AG04450 (cell line): ENCODE measurements at regions of chr14 and their contacts with region 1.

Region 1: DNA sequence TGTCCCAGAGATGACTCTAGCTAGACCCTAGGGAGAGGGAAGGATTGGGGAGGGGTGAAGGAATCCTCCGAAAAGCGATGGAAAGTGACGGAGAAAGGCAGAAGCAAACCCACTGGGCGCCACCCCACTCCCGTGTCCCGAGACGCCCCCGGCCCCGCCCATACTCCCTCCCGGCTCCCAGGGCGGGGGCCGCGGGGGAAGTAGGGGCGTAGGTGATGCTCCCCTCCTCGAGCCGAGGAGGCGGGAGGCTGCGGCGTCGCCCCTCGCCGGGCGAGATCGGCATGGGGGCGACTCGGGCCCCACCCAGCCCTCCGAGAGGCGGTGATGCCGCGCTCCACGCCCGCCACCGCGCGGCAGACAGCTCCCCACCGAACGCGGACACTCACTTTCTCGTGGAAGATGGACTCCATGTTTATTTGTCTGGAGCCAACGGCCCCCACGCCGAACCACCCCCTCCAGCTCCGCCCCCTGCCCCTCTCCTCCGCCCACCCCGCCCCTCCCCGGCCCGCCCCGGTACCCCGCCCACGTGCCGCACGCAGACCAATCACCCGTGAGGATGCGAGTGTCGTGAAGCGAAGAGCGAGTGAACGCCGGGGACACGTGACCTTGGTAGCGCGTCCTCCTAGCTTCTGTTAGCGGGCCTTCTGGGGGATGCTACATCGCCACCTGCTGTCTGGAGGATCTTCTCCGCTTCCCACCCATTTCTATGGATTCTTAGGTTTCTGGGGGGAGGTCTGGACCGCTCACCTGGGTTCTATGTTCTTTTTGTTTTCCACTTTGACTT is at the start of gene ATXN3:
- DNase-seq: peak; percentile 96
- H3K4me3 ChIP-seq: peak within 1 kb of the TSS; percentile 90
- H3K27ac ChIP-seq: peak within 1 kb of the TSS; percentile 96
- H3K27me3 ChIP-seq: no peaks in the 10 kb centered on the region
- CTCF ChIP-seq: peak; percentile 81
- polyA plus RNA-seq, gene ATXN3: 28.9 and 38.2 TPM in 2 replicates

Region 2: GRCh38 chr14:92039719-92040430 is 66.5 kb before region 1 on chr14 and contains the start of gene TRIP11:
- CTCF ChIA-PET with region 1: interaction called, 7 read pairs
- POLR2A ChIA-PET with region 1: interaction called, 15 read pairs
- DNase-seq: peak; percentile 88
- H3K4me3 ChIP-seq: peak within 1 kb of the TSS; percentile 86
- H3K27ac ChIP-seq: peak within 1 kb of the TSS; percentile 100
- H3K27me3 ChIP-seq: no peaks in the 10 kb centered on the region
- CTCF ChIP-seq: no peak
- polyA plus RNA-seq, gene TRIP11: 22.8 and 35.5 TPM in 2 replicates

Region 3: GRCh38 chr14:92093320-92093719 is 13.0 kb before region 1 on chr14:
- CTCF ChIA-PET with region 1: interaction called, 14 read pairs
- POLR2A ChIA-PET with region 1: no interaction called
- DNase-seq: no peak
- H3K4me3 ChIP-seq: no peak overlapping the region
- H3K27ac ChIP-seq: no peak overlapping the region
- H3K27me3 ChIP-seq: no peaks in the 10 kb centered on the region
- CTCF ChIP-seq: no peak

Region 4: DNA sequence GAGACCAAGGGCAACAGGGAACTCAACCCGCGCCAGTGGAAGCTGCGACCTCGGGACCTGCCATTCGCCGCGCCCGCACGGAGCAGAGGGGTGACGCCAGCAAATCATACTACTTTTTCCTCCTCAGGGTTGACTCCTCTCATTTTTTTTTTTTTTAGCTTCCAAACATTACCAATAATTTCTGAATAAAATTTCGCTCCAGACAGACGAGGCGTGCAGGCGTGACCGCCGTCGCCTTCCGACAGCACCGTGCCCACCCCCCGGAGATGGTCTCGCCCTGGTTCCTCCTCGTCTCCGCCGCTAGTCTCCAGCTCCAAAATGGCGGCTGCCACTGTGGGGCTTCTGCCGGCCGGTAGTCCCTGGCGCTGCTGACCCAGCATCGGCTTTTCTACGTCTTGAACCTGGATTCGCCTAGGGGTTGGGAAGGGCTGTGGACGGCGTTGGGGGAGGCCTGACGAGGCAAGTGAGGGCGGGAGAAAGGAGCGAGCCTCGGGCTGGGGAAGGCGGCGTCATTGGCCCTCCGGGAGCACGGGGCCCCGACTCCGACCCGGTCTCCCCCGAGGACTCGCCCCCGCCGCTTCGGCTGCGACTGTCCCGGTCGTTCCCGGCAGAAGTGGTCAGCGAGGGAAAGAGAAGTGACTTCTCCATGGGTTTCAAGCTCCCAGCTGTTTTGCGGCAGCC is 15.5 kb after region 1 on chr14 and contains the starts of genes CPSF2 and NDUFB1:
- CTCF ChIA-PET with region 1: interaction called, 140 read pairs
- POLR2A ChIA-PET with region 1: interaction called, 21 read pairs
- DNase-seq: no peak
- H3K4me3 ChIP-seq: peak within 1 kb of the TSS; percentile 95
- H3K27ac ChIP-seq: peak within 1 kb of the TSS; percentile 92
- H3K27me3 ChIP-seq: no peaks in the 10 kb centered on the region
- CTCF ChIP-seq: no peak
- polyA plus RNA-seq, gene CPSF2: 45.5 and 55.3 TPM in 2 replicates
- polyA plus RNA-seq, gene NDUFB1: 345 and 448 TPM in 2 replicates

Region 5: GRCh38 chr14:92135267-92135666 is 28.9 kb after region 1 on chr14:
- CTCF ChIA-PET with region 1: interaction called, 12 read pairs
- POLR2A ChIA-PET with region 1: interaction called, 5 read pairs
- DNase-seq: no peak
- H3K4me3 ChIP-seq: no peak overlapping the region
- H3K27ac ChIP-seq: no peak overlapping the region
- H3K27me3 ChIP-seq: no peaks in the 10 kb centered on the region
- CTCF ChIP-seq: peak; percentile 67